Activated T-helper 1 cell treated with anti-CD3 and anti-CD28 coated beads, Interleukin-12 subunit alpha, Interleukin-12 subunit beta, Interleukin-2, Interleukin-4 antibody, amounts not matched to agents 30 ng/mL and 10 ng/mL and 1 ng/mL, durations not matched to agents 14 hours and 24 hours and 36 hours (primary cell): ENCODE measurements at regions of chr3 and their contacts with region 1.

Region 1: DNA sequence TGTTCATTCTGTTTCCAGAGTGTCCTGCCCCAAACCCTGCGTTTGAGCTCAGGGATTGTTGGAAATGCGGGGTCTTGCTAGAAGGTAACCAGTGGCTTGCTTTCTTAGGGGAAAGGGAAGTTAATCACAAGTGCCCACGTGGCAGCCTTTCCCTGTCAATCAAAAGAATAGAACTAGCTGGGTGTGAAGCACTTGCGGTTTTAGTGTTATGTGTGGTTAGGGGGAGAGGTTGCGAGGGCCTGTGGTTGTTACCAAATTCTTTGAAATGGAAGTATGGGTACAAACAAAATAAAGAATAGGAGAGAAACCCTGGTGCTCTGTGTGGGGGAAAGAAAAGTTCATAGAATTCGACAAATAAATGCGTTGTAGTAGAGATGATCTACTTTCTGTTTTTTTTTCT is 67.6 kb downstream of the FNDC3B start:
- DNase-seq: peak; percentile 68
- H3K4me3 Mint-ChIP-seq: peak overlapping the region; percentile 82
- H3K27ac Mint-ChIP-seq: peak overlapping the region; percentile 91
- H3K4me1 Mint-ChIP-seq: peaks cover 77% of the 10 kb centered on the region
- H3K27me3 Mint-ChIP-seq: no peaks in the 10 kb centered on the region

Region 2: DNA sequence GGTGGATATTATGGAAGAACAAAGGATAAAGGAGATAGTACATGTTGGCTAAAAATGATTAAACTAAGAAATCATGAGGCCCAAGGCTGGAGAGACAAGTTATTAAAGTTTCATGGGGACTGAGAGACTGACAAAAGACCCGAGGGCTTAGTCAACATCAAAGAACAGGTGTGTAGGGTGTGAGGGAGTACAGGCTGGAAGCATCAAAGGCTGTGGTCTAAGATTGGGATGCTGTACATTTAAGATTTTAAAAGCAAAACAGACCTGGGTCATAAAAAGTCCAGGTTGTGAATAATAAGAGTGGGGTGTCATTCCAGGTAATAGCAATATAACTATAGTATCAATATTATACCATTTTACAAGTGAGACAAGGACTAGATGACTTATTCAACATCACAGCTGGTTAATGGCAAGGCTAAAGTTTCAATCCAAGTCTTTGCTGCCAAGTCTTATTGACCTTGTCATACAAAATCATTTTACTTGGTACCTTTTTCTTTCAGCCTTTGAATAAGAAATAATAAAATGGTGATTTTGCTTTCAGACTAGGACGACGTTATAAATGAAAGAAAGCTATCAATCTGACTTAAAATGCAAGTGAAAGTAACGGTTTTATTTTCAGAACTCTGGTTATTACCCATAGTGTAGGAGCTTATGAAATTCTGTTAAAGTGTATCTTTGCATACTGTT is 858.4 kb before region 1 on chr3:
- intact Hi-C with region 1: loop called (anchors 1 kb)
- DNase-seq: no peak
- H3K4me3 Mint-ChIP-seq: no peak overlapping the region
- H3K27ac Mint-ChIP-seq: no peak overlapping the region
- H3K4me1 Mint-ChIP-seq: peaks cover 16% of the 10 kb centered on the region
- H3K27me3 Mint-ChIP-seq: no peaks in the 10 kb centered on the region

Region 3: DNA sequence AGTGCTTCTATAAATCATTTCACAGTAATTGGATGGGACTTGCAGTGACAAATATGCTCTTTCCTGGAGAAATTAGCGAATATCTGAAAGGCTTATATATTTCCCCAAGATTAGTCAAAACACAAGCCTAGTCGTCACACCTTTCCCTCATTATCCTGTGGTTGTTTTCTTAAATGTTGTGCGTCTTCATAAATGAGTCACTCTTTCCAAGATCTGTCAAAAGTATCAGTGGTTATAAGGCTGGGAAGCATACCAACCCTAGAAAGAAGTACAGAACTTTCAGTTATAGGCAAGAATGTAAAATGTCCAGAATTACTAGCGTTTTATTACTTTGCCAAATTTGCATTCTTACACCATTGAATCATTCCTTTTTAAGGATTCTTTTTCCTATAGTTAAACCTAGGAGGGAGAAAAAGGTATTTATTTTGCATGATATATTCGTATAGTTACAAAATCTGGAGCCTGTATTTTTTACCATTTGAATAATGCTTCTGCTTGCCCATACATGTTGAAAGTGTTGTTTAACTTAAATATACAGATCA is 230.2 kb before region 1 on chr3:
- intact Hi-C with region 1: loop called (anchors 1 kb)
- DNase-seq: no peak
- H3K4me3 Mint-ChIP-seq: no peak overlapping the region
- H3K27ac Mint-ChIP-seq: peak overlapping the region; percentile 18
- H3K4me1 Mint-ChIP-seq: peaks cover 11% of the 10 kb centered on the region
- H3K27me3 Mint-ChIP-seq: peaks cover 16% of the 10 kb centered on the region

Region 4: DNA sequence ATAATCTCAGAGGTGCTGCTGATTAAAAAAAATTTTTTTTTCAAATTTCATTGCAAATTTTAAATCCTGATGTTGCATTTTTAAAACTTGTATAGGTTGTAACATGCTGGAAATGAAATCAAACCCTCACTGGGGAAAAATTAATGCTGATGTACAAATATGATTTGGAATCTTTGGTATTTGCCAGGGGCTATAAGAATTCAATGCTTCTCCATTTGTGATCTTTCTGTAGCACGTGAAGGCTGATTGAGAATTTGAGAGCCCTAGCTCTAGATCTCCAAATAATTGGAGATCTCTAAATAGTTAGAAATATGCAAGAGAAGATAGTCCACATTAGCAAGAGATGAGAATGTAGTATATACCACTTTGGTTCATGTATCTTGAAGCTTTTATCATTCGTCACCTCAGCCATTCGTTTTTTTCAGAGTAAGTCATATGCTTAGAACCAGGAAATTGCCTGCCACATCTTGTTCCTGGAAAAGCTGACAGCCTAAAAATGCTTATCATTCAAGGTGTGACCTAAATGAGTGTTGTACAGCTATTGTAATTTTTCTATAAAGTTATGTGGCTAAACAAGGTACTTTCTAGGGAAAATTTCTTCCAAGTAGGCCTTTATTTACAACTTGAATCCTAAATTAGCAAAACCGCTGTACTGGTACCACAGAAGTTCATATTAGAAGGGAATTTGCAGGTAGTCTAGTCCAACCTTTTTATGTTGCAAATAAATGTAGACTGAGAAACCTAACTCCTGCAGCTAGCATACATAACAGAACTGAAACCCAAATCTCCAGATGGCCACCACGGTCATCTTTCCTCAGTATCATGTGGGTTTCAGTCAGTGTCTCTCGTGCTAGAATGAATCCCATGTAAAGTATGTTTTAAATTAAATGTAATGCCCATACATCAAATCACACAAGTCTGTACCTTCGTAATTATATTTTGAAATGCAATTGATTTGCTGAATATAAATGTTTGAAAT is 19.1 kb before region 1 on chr3:
- intact Hi-C with region 1: loop called (anchors 1 kb)
- DNase-seq: no peak
- H3K4me3 Mint-ChIP-seq: peak overlapping the region; percentile 25
- H3K27ac Mint-ChIP-seq: peak overlapping the region; percentile 59
- H3K4me1 Mint-ChIP-seq: peaks cover 66% of the 10 kb centered on the region
- H3K27me3 Mint-ChIP-seq: no peaks in the 10 kb centered on the region

Region 5: GRCh38 chr3:172138795-172139441 is 31.9 kb after region 1 on chr3:
- intact Hi-C with region 1: loop called (anchors 1 kb)
- DNase-seq: no peak
- H3K4me3 Mint-ChIP-seq: peak overlapping the region; percentile 53
- H3K27ac Mint-ChIP-seq: peak overlapping the region; percentile 84
- H3K4me1 Mint-ChIP-seq: peaks cover 75% of the 10 kb centered on the region
- H3K27me3 Mint-ChIP-seq: no peaks in the 10 kb centered on the region

Region 6: DNA sequence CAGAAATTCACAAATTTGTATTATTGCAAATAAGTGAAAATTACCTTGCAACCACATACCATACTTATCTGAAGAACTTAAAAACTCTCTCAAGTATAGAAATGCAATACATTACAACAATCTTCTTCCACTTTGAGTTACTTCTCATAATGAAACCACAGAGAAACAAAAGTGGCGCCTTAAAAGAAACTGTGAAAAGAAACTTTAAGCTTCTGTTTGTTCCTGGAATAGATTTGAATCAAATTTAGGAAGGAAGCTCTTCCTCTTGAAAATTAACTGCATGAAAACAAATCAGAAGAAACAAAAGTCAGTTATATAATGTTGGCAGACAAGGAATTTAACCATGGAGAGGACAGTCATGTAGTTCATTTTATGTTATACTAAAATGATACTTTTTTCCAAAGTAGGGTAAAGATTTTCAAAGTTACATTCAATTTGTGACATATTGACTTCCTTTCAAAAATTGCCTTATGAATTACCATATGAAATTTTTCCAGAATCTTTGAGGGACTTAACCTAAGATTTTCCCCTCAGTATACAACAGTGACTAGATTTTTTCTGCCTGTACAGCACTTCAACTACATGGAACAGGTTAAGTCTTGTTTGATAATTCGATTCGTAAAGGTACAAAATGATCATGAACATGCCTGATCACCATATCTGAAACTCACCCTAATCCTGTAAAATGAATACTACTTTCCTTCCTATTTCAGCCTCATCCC is 473.9 kb after region 1 on chr3:
- intact Hi-C with region 1: loop called (anchors 2 kb)
- DNase-seq: no peak
- H3K4me3 Mint-ChIP-seq: peak overlapping the region; percentile 79
- H3K27ac Mint-ChIP-seq: peak overlapping the region; percentile 88
- H3K4me1 Mint-ChIP-seq: peaks cover 97% of the 10 kb centered on the region
- H3K27me3 Mint-ChIP-seq: no peaks in the 10 kb centered on the region